ENCODE measurements at regions of chr11 and their contacts with region 1.

Region 1: GRCh38 chr11:94786264-94787126 is 18.3 kb downstream of the AMOTL1 start:
- DNase-seq: peak in 1 of 10 donors; percentile 72

Region 2: GRCh38 chr11:94897330-94897768 is 110.9 kb after region 1 on chr11:
- intact Hi-C with region 1: loop called (anchors 10 kb)
- DNase-seq: peak in 7 of 10 donors; percentile 36 to 85 (median 57)